ENCODE measurements at regions of chr3 and their contacts with region 1.

Region 1: DNA sequence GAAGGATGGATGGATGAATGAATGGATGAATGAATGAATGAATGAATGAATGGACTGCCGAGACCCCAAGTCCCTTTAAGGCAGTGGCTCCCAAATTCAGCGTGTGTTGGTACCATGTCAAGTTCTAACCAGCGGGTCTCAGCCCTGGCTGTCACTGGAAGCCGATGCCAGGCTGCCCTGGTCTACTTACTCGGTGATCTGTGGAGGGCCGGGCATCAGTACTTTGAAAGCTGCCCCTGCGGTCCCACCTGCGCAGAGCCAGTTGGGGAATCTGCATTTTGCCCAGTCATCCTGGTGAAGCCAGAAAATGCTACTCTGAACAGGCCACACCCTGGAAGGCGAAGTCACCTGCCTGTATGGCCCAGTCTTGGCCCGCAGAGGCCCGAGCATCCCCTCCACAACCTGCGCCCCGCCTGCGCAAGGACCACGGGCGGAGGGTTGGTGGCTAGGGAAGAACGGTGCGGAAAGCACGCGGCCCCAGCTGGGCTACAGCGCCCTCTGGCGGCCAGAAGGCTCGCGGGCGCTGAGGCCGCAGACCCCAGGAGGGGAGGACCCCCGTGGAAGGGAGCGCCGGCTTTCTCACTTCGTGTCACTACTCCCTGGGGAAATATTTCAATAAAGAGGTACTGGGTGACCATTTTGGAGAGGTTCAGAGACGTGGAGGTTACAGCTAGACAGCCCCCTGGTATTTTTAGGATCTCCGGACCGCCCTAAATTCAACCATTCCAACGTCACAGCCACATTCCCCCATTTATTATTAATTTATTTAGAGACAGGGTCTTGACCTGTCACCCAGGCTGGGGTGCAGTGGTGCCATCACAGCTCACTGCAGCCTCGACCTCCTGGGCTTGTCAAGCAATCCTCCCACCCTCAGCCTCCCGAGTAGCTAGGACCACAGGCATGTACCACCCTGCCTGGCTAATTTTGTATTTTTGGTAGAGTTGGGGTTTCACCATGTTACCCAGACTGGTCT is 34.9 kb downstream of the PRKCD start:
- DNase-seq: peak; percentile 52
- H3K4me3 ChIP-seq: no peak overlapping the region
- H3K27ac ChIP-seq: no peak overlapping the region
- H3K4me1 ChIP-seq: peaks cover 5% of the 10 kb centered on the region
- H3K27me3 ChIP-seq: no peaks in the 10 kb centered on the region
- CTCF ChIP-seq: peak; percentile 82

Region 2: GRCh38 chr3:51581529-51581928 is 1614.4 kb before region 1 on chr3:
- CTCF ChIA-PET with region 1: no interaction called
- POLR2A ChIA-PET with region 1: interaction called, 10 read pairs
- intact Hi-C with region 1: no loop called
- DNase-seq: peak; percentile 49
- H3K4me3 ChIP-seq: no peak overlapping the region
- H3K27ac ChIP-seq: no peak overlapping the region
- H3K4me1 ChIP-seq: peaks cover 10% of the 10 kb centered on the region
- H3K27me3 ChIP-seq: no peaks in the 10 kb centered on the region
- CTCF ChIP-seq: no peak

Region 3: DNA sequence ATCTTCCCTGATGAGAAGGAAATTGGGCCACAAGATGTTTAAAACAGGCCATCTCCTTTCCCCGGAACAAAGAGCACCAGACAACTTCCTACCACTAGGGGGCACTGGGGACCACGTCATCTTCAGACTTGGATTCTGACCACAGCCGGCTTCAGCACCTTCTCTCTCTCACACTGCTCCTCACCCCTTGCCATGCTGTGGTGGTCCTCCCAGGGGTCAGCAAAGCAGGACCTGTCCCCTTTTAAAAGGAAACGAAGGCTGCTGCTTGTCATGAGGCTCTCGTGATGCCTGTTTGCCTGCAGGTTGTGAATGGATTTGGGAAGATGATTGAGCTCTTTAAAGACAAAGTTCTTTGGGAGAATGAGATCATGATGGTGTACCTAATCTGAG is 81.9 kb before region 1 on chr3:
- CTCF ChIA-PET with region 1: interaction called, 7 read pairs
- POLR2A ChIA-PET with region 1: no interaction called
- intact Hi-C with region 1: loop called (anchors 1 kb)
- DNase-seq: peak; percentile 62
- H3K4me3 ChIP-seq: no peak overlapping the region
- H3K27ac ChIP-seq: no peak overlapping the region
- H3K4me1 ChIP-seq: no peaks in the 10 kb centered on the region
- H3K27me3 ChIP-seq: no peaks in the 10 kb centered on the region
- CTCF ChIP-seq: peak; percentile 71

Region 4: GRCh38 chr3:53134631-53135232 is 61.2 kb before region 1 on chr3:
- CTCF ChIA-PET with region 1: interaction called, 4 read pairs
- POLR2A ChIA-PET with region 1: no interaction called
- intact Hi-C with region 1: loop called (anchors 2 kb)
- DNase-seq: peak; percentile 42
- H3K4me3 ChIP-seq: no peak overlapping the region
- H3K27ac ChIP-seq: no peak overlapping the region
- H3K4me1 ChIP-seq: no peaks in the 10 kb centered on the region
- H3K27me3 ChIP-seq: no peaks in the 10 kb centered on the region
- CTCF ChIP-seq: peak; percentile 62

Region 5: GRCh38 chr3:53776494-53777101 is 580.7 kb after region 1 on chr3:
- CTCF ChIA-PET with region 1: no interaction called
- POLR2A ChIA-PET with region 1: no interaction called
- intact Hi-C with region 1: no loop called
- DNase-seq: no peak
- H3K4me3 ChIP-seq: no peak overlapping the region
- H3K27ac ChIP-seq: no peak overlapping the region
- H3K4me1 ChIP-seq: no peaks in the 10 kb centered on the region
- H3K27me3 ChIP-seq: no peaks in the 10 kb centered on the region
- CTCF ChIP-seq: no peak